ENCODE measurements at regions of chr11 and their contacts with region 1.

Region 1: GRCh38 chr11:92376146-92376599 is 151.6 kb downstream of the FAT3 start:
- DNase-seq: peak; percentile 44

Region 2: DNA sequence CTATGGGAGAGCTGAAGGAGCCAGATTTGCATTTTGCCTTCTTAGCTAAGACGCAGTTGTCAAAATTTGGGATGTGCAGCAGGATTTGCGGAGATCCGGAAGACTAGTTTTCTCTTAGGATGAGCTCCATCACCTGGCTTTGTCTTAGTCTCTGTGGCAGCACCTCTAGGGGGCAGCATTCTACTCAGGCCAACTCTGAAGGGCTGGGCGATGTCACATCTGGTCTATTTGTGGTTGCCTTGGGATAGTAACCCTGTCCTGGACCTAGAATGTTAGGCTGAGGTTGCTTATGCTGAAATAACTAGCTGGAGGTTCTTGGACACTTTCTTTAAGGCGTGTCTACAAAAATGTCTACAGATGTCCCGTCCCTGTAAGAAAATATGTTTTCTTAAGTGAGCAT is 35.3 kb before region 1 on chr11:
- CTCF ChIA-PET with region 1: interaction called, 12 read pairs
- POLR2A ChIA-PET with region 1: no interaction called
- DNase-seq: peak; percentile 53

Region 3: DNA sequence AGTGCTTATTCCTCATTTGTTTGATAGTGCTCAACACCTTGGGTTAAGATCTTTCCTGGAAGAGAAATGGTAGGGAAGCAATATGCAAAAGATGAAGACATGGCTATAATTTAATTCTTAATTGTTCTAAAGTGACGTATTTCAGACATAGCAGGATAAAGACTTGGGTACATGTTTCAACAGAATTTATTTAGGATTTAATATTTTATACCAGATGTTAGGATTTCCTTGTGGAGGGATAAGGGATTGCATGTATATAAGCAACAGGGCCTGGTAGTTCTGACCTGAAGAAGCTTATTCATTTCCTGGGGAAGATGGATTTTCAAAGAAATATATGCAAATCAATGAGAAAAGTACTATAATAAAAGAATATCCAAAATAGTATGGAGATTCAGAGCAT is 12.2 kb after region 1 on chr11:
- CTCF ChIA-PET with region 1: interaction called, 14 read pairs
- POLR2A ChIA-PET with region 1: no interaction called
- DNase-seq: no peak